ENCODE measurements at regions of chr3 and their contacts with region 1.

Region 1: GRCh38 chr3:108835101-108835500 is 12.5 kb downstream of the TRAT1 start:
- DNase-seq: peak; percentile 47
- H3K4me3 Mint-ChIP-seq: peak overlapping the region; percentile 86
- H3K27ac Mint-ChIP-seq: peak overlapping the region; percentile 99
- H3K4me1 Mint-ChIP-seq: peaks cover 92% of the 10 kb centered on the region
- H3K27me3 Mint-ChIP-seq: no peaks in the 10 kb centered on the region

Region 2: GRCh38 chr3:108124337-108125152 is 710.6 kb before region 1 on chr3:
- intact Hi-C with region 1: loop called (anchors 2 kb)
- DNase-seq: peak; percentile 67
- H3K4me3 Mint-ChIP-seq: peak overlapping the region; percentile 89
- H3K27ac Mint-ChIP-seq: peak overlapping the region; percentile 96
- H3K4me1 Mint-ChIP-seq: peaks cover 59% of the 10 kb centered on the region
- H3K27me3 Mint-ChIP-seq: peaks cover 2% of the 10 kb centered on the region

Region 3: DNA sequence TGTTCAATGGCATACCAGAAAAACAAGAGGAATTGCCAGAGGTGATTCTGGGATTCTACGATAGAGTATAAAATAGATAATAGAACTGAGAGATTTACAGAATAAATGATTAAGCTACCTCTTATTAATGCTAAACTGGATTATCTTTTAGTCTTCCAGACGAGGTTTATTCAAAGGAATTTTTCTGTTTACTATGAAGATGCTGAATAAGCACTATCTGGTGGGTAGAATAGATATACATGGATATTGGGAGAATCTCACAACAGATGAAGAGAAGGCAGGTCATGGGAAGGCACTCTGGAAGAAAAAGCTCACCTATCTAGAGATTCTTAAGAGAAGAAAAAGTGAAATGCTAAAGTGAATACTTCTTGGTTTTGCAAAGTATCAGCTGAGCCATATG is 257.0 kb before region 1 on chr3:
- intact Hi-C with region 1: loop called (anchors 1 kb)
- DNase-seq: no peak
- H3K4me3 Mint-ChIP-seq: no peak overlapping the region
- H3K27ac Mint-ChIP-seq: no peak overlapping the region
- H3K4me1 Mint-ChIP-seq: peaks cover 13% of the 10 kb centered on the region
- H3K27me3 Mint-ChIP-seq: no peaks in the 10 kb centered on the region

Region 4: GRCh38 chr3:108806316-108806715 is 28.8 kb before region 1 on chr3:
- intact Hi-C with region 1: loop called (anchors 1 kb)
- DNase-seq: peak; percentile 53
- H3K4me3 Mint-ChIP-seq: no peak overlapping the region
- H3K27ac Mint-ChIP-seq: peak overlapping the region; percentile 87
- H3K4me1 Mint-ChIP-seq: peaks cover 23% of the 10 kb centered on the region
- H3K27me3 Mint-ChIP-seq: peaks cover 5% of the 10 kb centered on the region

Region 5: GRCh38 chr3:108862865-108863798 is 28.0 kb after region 1 on chr3:
- intact Hi-C with region 1: loop called (anchors 1 kb)
- DNase-seq: no peak
- H3K4me3 Mint-ChIP-seq: peak overlapping the region; percentile 59
- H3K27ac Mint-ChIP-seq: peak overlapping the region; percentile 96
- H3K4me1 Mint-ChIP-seq: peaks cover 52% of the 10 kb centered on the region
- H3K27me3 Mint-ChIP-seq: no peaks in the 10 kb centered on the region